H1 (cell line): ENCODE measurements at regions of chr9 and their contacts with region 1.

Region 1: GRCh38 chr9:36903541-36904435 is 130.3 kb downstream of the PAX5 start:
- DNase-seq: no peak
- H3K4me3 ChIP-seq: no peak overlapping the region
- H3K27ac ChIP-seq: no peak overlapping the region
- H3K4me1 ChIP-seq: peaks cover 0 to 3% (median 2%) of the 10 kb centered on the region in 4 experiments; a peak in 4 of 7 replicates
- H3K27me3 ChIP-seq: no peaks in the 10 kb centered on the region
- CTCF ChIP-seq: no peak
- EP300 ChIP-seq: no peak
- POLR2A ChIP-seq: no peak
- RAD21 ChIP-seq: no peak

Region 2: GRCh38 chr9:36690412-36691168 is 213.2 kb before region 1 on chr9:
- CTCF ChIA-PET with region 1: no interaction called
- POLR2A ChIA-PET with region 1: no interaction called
- DNase-seq: no peak
- H3K4me3 ChIP-seq: no peak overlapping the region
- H3K27ac ChIP-seq: no peak overlapping the region
- H3K4me1 ChIP-seq: no peaks in the 10 kb centered on the region
- H3K27me3 ChIP-seq: no peaks in the 10 kb centered on the region
- CTCF ChIP-seq: no peak
- EP300 ChIP-seq: no peak
- POLR2A ChIP-seq: no peak
- RAD21 ChIP-seq: no peak

Region 3: DNA sequence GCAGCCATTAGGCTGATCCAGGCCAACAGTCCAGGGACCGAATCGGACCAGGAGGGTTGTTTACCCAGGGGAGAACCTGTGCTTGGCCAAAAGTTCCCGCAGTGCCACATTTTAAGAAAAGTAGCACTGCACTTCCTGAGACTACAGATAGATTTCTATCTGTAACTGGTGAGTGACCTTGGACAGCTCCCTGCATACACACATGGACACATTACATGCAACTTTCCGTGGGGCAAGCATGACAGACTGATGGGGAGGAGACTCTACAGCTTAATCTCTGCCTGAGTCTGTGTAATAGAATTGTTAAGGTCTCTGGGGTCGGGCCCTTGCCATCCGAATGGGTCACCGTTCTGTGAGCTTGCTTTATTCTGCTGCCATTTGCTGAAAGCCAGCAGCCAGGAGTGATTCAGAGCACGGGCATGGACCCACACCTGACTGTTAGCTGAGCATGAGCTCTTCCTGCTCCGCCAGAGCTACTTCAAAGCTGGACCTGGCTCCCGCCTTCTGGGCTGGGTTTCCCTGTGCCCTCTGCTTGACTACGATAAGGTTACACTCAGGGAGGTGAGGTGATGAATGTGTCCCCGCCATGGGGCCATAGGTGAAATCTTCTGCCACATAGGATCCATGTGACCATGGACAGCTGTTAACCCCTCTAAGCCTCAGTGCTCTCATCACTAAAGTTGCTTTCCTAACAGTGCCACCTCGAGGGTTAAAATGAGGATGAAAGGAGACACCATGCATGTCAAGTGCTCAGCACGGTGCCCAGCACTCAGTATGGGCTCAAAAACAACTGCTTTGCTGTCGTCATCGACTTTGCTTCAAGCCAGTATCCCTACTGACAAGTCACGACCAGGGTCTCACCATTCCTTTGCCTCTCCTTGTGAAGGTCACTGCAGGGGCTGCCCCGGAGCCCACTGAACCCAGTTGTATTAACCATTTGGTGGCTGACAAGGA is 131.1 kb before region 1 on chr9:
- CTCF ChIA-PET with region 1: no interaction called
- POLR2A ChIA-PET with region 1: no interaction called
- DNase-seq: no peak
- H3K4me3 ChIP-seq: 0 out of 8 replicates have a peak overlapping the region, but pooled peaks of 1 of the 4 experiments have one; percentile 1
- H3K27ac ChIP-seq: no peak overlapping the region
- H3K4me1 ChIP-seq: peaks cover 0 to 11% (median 5%) of the 10 kb centered on the region in 4 experiments; a peak in 4 of 7 replicates
- H3K27me3 ChIP-seq: peaks cover 0 to 2% (median under 1%) of the 10 kb centered on the region in 4 experiments; a peak in 3 of 7 replicates
- CTCF ChIP-seq: peak in 1 of 3 experiments; percentile 15; a peak in 1 of 4 replicates
- EP300 ChIP-seq: no peak
- POLR2A ChIP-seq: no peak
- RAD21 ChIP-seq: 0 out of 4 replicates have a peak, but pooled peaks of 1 of the 2 experiments have one; percentile 5

Region 4: DNA sequence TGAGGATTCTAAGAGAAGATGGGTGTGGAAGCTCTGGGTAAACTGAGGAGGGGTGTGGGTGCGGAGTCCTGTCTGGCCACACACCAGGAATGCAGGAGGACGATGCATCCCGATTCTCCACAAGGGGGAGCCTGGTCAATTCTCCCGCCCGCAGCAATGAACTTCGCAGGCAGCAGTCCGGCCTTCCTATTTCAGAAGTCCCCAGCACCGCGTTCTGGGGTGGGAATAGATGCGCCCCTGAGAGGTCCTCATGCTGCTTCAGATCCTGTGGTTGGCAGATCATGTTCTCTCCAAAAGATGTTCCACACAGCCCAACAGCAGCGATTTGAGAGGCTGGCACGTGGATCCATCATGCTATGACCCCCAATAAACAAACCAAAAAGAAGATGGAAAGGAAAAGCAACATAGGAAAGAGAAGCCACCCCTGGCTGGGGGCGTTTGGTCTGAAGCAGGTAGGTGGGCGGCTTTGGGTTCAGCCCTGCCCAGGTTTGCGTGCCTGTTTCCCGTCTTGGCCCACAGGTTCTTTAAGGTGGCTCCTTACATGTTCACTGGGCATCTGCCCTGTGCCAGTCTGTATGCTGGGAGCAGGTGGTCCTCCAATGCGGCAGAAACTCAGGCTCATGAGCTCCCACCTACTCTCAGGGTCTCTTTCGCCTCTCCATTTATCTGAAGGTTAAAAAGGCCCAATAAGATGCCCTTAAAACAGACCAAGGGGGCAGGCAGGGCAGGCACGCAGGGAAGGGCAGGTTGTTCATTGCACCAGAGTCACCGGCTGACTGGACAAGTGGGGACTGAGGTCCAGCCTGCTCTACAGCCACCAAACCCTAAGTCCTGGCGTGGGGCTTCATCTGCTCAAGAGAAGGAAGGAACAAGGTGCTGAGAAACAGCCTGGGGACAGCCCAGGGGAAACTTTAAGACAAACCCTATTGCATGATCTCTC is 41.3 kb before region 1 on chr9:
- CTCF ChIA-PET with region 1: interaction called, 18 read pairs
- POLR2A ChIA-PET with region 1: interaction called, 3 read pairs
- DNase-seq: peak in 1 of 2 experiments; percentile 75
- H3K4me3 ChIP-seq: no peak overlapping the region
- H3K27ac ChIP-seq: no peak overlapping the region
- H3K4me1 ChIP-seq: peaks cover 0 to 17% (median 7%) of the 10 kb centered on the region in 4 experiments; a peak in 6 of 7 replicates
- H3K27me3 ChIP-seq: peaks cover 0 to 28% (median 21%) of the 10 kb centered on the region in 4 experiments; a peak in 5 of 7 replicates
- CTCF ChIP-seq: peak; percentile 78 to 90 (median 82)
- EP300 ChIP-seq: no peak
- POLR2A ChIP-seq: no peak
- RAD21 ChIP-seq: peak; percentile 49 to 66

Region 5: GRCh38 chr9:36878986-36879982 is 24.5 kb before region 1 on chr9:
- CTCF ChIA-PET with region 1: interaction called, 99 read pairs
- POLR2A ChIA-PET with region 1: no interaction called
- DNase-seq: no peak
- H3K4me3 ChIP-seq: no peak overlapping the region
- H3K27ac ChIP-seq: no peak overlapping the region
- H3K4me1 ChIP-seq: no peaks in the 10 kb centered on the region
- H3K27me3 ChIP-seq: no peaks in the 10 kb centered on the region
- CTCF ChIP-seq: no peak
- EP300 ChIP-seq: no peak
- POLR2A ChIP-seq: no peak
- RAD21 ChIP-seq: no peak

Region 6: DNA sequence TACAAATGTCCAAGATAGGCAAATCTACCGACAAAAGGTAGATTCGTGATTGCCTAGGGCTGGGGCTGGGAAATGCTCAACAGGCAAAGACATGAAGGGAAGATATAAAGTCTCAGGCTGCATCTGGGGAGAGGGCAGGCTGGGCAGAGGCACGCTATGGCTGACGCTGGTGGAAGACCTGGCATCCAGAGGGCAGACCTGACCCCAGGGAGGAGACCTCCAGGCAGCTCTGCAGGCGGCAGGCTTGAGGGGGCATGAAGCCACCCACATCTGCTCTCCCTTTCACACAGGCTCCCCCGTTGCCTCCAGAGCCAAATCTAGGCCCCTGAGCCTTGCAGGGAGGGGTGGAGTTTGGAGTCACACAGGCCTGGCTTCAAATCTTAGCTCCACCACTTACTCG is 15.2 kb before region 1 on chr9:
- CTCF ChIA-PET with region 1: interaction called, 11 read pairs
- POLR2A ChIA-PET with region 1: interaction called, 3 read pairs
- DNase-seq: no peak
- H3K4me3 ChIP-seq: no peak overlapping the region
- H3K27ac ChIP-seq: no peak overlapping the region
- H3K4me1 ChIP-seq: peaks cover 0 to 2% (median 0%) of the 10 kb centered on the region in 4 experiments; a peak in 3 of 7 replicates
- H3K27me3 ChIP-seq: no peaks in the 10 kb centered on the region; a peak in 1 of 7 replicates
- CTCF ChIP-seq: no peak
- EP300 ChIP-seq: no peak
- POLR2A ChIP-seq: no peak
- RAD21 ChIP-seq: no peak

Region 7: GRCh38 chr9:36980148-36980974 is 76.6 kb after region 1 on chr9:
- CTCF ChIA-PET with region 1: interaction called, 14 read pairs
- POLR2A ChIA-PET with region 1: no interaction called
- DNase-seq: peak; percentile 53 to 74
- H3K4me3 ChIP-seq: no peak overlapping the region; a peak in 1 of 8 replicates
- H3K27ac ChIP-seq: no peak overlapping the region
- H3K4me1 ChIP-seq: peaks cover 0 to 14% (median 5%) of the 10 kb centered on the region in 4 experiments; a peak in 4 of 7 replicates
- H3K27me3 ChIP-seq: peaks cover 15 to 34% (median 32%) of the 10 kb centered on the region in 4 experiments
- CTCF ChIP-seq: peak; percentile 50 to 63 (median 61)
- EP300 ChIP-seq: no peak
- POLR2A ChIP-seq: no peak
- RAD21 ChIP-seq: peak; percentile 62 to 76

Region 8: GRCh38 chr9:37079370-37080164 is 175.8 kb after region 1 on chr9:
- CTCF ChIA-PET with region 1: no interaction called
- POLR2A ChIA-PET with region 1: no interaction called
- DNase-seq: peak; percentile 84 to 90
- H3K4me3 ChIP-seq: peak overlapping the region; percentile 76 to 94 (median 88)
- H3K27ac ChIP-seq: peak overlapping the region; percentile 69
- H3K4me1 ChIP-seq: peaks cover 0 to 3% (median 0%) of the 10 kb centered on the region in 4 experiments; a peak in 2 of 7 replicates
- H3K27me3 ChIP-seq: peaks cover 2 to 10% (median 9%) of the 10 kb centered on the region in 4 experiments; a peak in 6 of 7 replicates
- CTCF ChIP-seq: no peak; a peak in 1 of 4 replicates
- EP300 ChIP-seq: no peak
- POLR2A ChIP-seq: peak in 1 of 2 experiments; percentile 77; a peak in 2 of 3 replicates
- RAD21 ChIP-seq: 0 out of 4 replicates have a peak, but pooled peaks of 1 of the 2 experiments have one; percentile 1

Region 9: DNA sequence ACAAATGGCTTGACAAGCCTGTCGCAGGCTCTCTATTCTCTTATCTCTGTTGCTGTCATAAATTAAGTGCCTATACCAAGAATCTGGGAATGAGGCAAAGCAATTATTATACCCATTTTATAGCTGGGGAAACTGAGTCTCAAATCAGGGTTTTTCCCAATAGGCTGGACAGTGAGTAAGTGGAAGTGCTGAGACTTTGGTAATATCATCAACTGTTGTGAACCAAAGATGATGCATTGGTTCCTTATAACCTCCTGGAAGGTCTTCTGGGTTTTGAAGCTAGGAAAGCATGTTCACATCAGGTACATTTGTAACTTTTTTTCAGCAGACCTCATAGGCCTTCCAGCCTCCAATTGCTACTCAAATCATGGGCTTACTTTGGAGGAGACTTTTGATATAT is 191.0 kb after region 1 on chr9:
- CTCF ChIA-PET with region 1: no interaction called
- POLR2A ChIA-PET with region 1: no interaction called
- DNase-seq: no peak
- H3K4me3 ChIP-seq: no peak overlapping the region
- H3K27ac ChIP-seq: no peak overlapping the region
- H3K4me1 ChIP-seq: no peaks in the 10 kb centered on the region
- H3K27me3 ChIP-seq: no peaks in the 10 kb centered on the region
- CTCF ChIP-seq: no peak
- EP300 ChIP-seq: no peak
- POLR2A ChIP-seq: no peak
- RAD21 ChIP-seq: no peak